Prostate gland (tissue), 2 donors: ENCODE measurements at regions of chr3 and their contacts with region 1.

Region 1: GRCh38 chr3:62188681-62189383 is 184.5 kb downstream of the FEZF2 start:
- DNase-seq: peak; percentile 75
- H3K4me3 ChIP-seq: no peak overlapping the region
- H3K27ac ChIP-seq: no peak overlapping the region
- H3K4me1 ChIP-seq: no peaks in the 10 kb centered on the region
- H3K27me3 ChIP-seq: no peaks in the 10 kb centered on the region
- CTCF ChIP-seq: peak; percentile 51 to 78 (median 76)
- POLR2A ChIP-seq: no peak

Region 2: GRCh38 chr3:61719278-61719977 is 469.4 kb before region 1 on chr3:
- intact Hi-C with region 1: no loop called
- DNase-seq: no peak
- H3K4me3 ChIP-seq: no peak overlapping the region
- H3K27ac ChIP-seq: no peak overlapping the region
- H3K4me1 ChIP-seq: no peaks in the 10 kb centered on the region
- H3K27me3 ChIP-seq: no peaks in the 10 kb centered on the region
- CTCF ChIP-seq: no peak
- POLR2A ChIP-seq: no peak

Region 3: DNA sequence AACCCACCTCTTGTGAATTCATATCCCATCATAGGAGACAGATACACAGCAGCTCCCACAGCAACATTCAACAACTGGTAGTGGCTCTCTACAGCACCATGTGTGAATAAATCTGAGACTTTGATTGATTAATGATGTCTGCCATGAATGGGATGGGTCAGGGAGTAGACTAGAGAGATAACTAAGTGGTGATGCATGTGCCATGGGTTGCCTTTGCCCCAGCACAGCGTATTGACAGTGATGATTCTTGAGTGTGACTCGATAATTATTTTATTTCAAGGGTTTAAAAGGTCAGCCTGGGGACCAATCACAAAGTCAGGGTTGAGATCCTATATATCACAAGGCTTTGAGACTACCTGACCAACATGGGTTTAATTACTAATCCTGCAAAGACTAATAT is 331.5 kb before region 1 on chr3:
- intact Hi-C with region 1: loop called (anchors 2 kb)
- DNase-seq: no peak
- H3K4me3 ChIP-seq: no peak overlapping the region
- H3K27ac ChIP-seq: no peak overlapping the region
- H3K4me1 ChIP-seq: no peaks in the 10 kb centered on the region
- H3K27me3 ChIP-seq: no peaks in the 10 kb centered on the region
- CTCF ChIP-seq: no peak
- POLR2A ChIP-seq: no peak

Region 4: GRCh38 chr3:61927332-61927731 is 261.5 kb before region 1 on chr3:
- intact Hi-C with region 1: loop called (anchors 10 kb)
- DNase-seq: no peak
- H3K4me3 ChIP-seq: no peak overlapping the region
- H3K27ac ChIP-seq: no peak overlapping the region
- H3K4me1 ChIP-seq: no peaks in the 10 kb centered on the region
- H3K27me3 ChIP-seq: no peaks in the 10 kb centered on the region
- CTCF ChIP-seq: no peak
- POLR2A ChIP-seq: no peak

Region 5: DNA sequence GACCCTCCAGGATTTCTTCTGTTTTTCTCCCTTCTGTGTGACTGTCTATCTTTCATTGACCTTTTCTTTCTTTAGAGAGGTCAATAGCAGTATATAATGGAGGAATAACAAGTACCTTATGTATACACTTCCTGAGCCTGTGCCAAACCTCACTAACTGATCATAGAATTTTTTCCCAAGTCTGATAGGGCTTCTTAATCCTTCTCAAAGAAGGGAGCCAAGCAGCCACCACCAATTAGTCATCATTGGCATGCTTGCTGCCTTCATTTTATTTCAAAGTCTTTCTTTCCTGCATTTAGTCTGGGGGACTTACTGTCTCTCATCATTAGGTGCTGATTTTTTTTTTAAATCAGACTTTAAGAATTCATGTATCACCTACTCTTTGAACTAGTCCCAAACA is 142.5 kb before region 1 on chr3:
- intact Hi-C with region 1: no loop called
- DNase-seq: no peak
- H3K4me3 ChIP-seq: no peak overlapping the region
- H3K27ac ChIP-seq: no peak overlapping the region
- H3K4me1 ChIP-seq: no peaks in the 10 kb centered on the region
- H3K27me3 ChIP-seq: no peaks in the 10 kb centered on the region
- CTCF ChIP-seq: no peak
- POLR2A ChIP-seq: no peak

Region 6: DNA sequence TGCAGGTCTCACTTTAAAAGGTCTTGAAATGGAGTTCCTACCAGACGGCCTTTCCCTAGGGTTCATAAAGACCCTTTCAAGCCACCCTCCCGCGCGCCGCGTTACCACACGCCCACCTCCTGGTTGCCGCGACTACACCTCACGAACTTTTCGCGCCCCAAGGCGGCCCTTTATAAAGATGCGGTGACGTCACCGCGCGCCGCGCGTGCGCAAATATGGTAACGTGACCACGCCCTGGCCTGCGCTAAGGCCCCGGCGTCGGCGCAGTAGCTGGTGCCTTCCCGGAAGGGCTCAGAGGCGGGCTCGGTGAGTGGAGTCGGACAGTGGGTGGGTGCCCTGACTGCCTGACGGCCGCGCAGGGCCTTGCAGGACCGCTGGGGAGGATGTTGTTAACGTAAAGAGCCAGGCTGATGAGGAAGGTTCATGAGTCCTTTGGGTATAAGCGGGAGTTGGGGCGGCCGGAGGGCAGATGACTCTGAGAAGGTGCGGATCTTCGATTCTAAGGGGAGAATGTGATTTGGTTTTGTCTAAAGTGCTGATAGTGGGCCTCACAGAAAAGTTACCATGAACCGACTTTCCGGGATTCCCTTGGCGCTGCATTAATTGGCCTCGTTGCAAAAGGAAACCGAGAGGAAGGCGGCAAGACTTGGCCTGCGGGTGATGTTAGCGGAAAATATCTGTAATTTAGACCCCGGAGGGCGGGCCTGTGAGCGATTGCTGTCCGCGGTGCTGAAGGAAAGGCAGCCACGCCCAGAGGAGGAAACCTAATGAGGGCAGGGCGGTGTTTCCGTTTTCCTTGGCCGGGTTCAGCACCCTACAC is 130.1 kb after region 1 on chr3:
- intact Hi-C with region 1: loop called (anchors 10 kb)
- DNase-seq: peak; percentile 58
- H3K4me3 ChIP-seq: peak overlapping the region; percentile 44 to 49
- H3K27ac ChIP-seq: peak overlapping the region; percentile 76 to 78
- H3K4me1 ChIP-seq: no peaks in the 10 kb centered on the region
- H3K27me3 ChIP-seq: no peaks in the 10 kb centered on the region
- CTCF ChIP-seq: no peak
- POLR2A ChIP-seq: no peak